MCF 10A (cell line): ENCODE measurements at regions of chr11 and their contacts with region 1.

Region 1: DNA sequence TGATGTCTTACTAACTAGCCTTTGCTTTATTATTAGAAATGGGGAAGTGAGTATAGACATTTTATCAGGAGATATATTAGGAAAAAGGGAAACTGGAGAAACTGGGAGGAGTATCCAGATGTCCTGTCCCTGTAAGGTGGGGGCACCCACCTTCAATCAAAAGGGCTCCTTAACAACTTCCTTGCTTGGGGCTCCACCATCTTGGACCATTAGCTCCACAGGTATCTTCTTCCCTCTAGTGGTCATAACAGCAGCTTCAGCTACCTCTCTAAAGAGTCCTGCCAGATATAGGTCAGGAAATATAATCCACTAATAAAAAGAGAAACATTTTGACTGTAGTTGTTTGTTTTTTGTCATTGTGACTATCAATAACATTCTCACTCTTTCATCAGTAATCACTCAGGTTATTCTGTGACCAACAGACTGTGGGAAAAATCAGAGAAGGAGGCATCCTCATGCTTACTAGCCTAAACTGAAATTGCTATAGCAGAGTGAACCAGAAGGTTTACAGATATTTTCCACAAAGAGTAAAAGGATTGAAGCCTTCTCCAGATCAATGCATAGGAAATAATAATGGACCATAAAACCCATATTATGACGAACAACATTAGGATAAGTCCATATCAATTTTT is 10.4 kb downstream of the OR51B4 start:
- DNase-seq: peak; percentile 54
- H3K4me3 Mint-ChIP-seq: no peak overlapping the region
- H3K27ac Mint-ChIP-seq: no peak overlapping the region
- H3K4me1 Mint-ChIP-seq: no peaks in the 10 kb centered on the region
- H3K27me3 Mint-ChIP-seq: peaks cover 13% of the 10 kb centered on the region
- CTCF ChIP-seq: peak; percentile 68

Region 2: GRCh38 chr11:4626207-4627099 is 664.9 kb before region 1 on chr11:
- CTCF ChIA-PET with region 1: interaction called, 3 read pairs
- POLR2A ChIA-PET with region 1: no interaction called
- intact Hi-C with region 1: loop called (anchors 5 kb)
- DNase-seq: peak; percentile 88
- H3K4me3 Mint-ChIP-seq: no peak overlapping the region
- H3K27ac Mint-ChIP-seq: no peak overlapping the region
- H3K4me1 Mint-ChIP-seq: no peaks in the 10 kb centered on the region
- H3K27me3 Mint-ChIP-seq: peaks cover 45% of the 10 kb centered on the region
- CTCF ChIP-seq: peak; percentile 73

Region 3: GRCh38 chr11:5107285-5107684 is 184.0 kb before region 1 on chr11:
- CTCF ChIA-PET with region 1: no interaction called
- POLR2A ChIA-PET with region 1: no interaction called
- intact Hi-C with region 1: no loop called
- DNase-seq: no peak
- H3K4me3 Mint-ChIP-seq: no peak overlapping the region
- H3K27ac Mint-ChIP-seq: no peak overlapping the region
- H3K4me1 Mint-ChIP-seq: no peaks in the 10 kb centered on the region
- H3K27me3 Mint-ChIP-seq: peaks cover 44% of the 10 kb centered on the region
- CTCF ChIP-seq: no peak

Region 4: DNA sequence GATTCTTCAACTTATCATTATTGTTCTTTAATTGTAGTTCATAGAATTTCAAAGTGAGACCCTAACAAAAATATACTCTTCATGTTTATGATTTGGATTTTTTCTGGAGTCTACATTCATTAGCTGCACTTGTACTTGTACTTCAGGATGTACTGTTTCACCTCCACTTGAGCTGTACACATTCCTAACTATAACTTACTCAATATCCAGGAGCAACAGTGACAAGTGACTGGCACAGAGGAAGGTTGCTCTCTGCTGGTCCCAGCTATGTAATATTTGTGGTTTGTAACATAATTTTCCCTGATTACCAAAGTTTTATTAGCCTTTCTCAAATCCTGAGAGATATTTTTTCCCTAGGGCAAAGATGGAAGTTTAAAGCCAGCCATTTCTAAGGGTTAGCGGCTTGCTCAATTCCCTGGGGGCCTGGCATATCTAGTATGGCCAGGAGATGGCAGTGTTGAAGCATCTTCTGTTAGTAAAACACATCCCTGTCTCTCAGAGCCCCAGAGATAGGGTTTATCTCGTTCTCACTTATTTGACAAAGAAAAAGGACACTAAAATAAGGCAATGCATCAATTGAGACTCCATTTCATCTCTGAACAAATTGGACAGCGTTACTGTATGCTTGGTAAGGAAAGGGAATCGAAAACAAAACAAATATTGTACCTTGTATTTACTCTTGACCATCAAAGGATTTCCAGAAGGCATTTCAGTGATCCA is 167.4 kb before region 1 on chr11:
- CTCF ChIA-PET with region 1: interaction called, 24 read pairs
- POLR2A ChIA-PET with region 1: no interaction called
- intact Hi-C with region 1: loop called (anchors 1 kb)
- DNase-seq: peak; percentile 74
- H3K4me3 Mint-ChIP-seq: no peak overlapping the region
- H3K27ac Mint-ChIP-seq: no peak overlapping the region
- H3K4me1 Mint-ChIP-seq: no peaks in the 10 kb centered on the region
- H3K27me3 Mint-ChIP-seq: peaks cover 62% of the 10 kb centered on the region
- CTCF ChIP-seq: peak; percentile 80

Region 5: GRCh38 chr11:5204787-5205186 is 86.5 kb before region 1 on chr11:
- CTCF ChIA-PET with region 1: interaction called, 18 read pairs
- POLR2A ChIA-PET with region 1: interaction called, 3 read pairs
- intact Hi-C with region 1: loop called (anchors 1 kb)
- DNase-seq: peak; percentile 63
- H3K4me3 Mint-ChIP-seq: no peak overlapping the region
- H3K27ac Mint-ChIP-seq: no peak overlapping the region
- H3K4me1 Mint-ChIP-seq: peaks cover 5% of the 10 kb centered on the region
- H3K27me3 Mint-ChIP-seq: peaks cover 39% of the 10 kb centered on the region
- CTCF ChIP-seq: peak; percentile 58

Region 6: DNA sequence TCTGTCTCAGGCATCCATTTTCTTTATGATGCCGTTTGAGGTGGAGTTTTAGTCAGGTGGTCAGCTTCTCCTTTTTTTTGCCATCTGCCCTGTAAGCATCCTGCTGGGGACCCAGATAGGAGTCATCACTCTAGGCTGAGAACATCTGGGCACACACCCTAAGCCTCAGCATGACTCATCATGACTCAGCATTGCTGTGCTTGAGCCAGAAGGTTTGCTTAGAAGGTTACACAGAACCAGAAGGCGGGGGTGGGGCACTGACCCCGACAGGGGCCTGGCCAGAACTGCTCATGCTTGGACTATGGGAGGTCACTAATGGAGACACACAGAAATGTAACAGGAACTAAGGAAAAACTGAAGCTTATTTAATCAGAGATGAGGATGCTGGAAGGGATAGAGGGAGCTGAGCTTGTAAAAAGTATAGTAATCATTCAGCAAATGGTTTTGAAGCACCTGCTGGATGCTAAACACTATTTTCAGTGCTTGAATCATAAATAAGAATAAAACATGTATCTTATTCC is 10.7 kb before region 1 on chr11:
- CTCF ChIA-PET with region 1: interaction called, 12 read pairs
- POLR2A ChIA-PET with region 1: no interaction called
- intact Hi-C with region 1: no loop called
- DNase-seq: peak; percentile 97
- H3K4me3 Mint-ChIP-seq: no peak overlapping the region
- H3K27ac Mint-ChIP-seq: no peak overlapping the region
- H3K4me1 Mint-ChIP-seq: peaks cover 17% of the 10 kb centered on the region
- H3K27me3 Mint-ChIP-seq: no peaks in the 10 kb centered on the region
- CTCF ChIP-seq: no peak

Region 7: DNA sequence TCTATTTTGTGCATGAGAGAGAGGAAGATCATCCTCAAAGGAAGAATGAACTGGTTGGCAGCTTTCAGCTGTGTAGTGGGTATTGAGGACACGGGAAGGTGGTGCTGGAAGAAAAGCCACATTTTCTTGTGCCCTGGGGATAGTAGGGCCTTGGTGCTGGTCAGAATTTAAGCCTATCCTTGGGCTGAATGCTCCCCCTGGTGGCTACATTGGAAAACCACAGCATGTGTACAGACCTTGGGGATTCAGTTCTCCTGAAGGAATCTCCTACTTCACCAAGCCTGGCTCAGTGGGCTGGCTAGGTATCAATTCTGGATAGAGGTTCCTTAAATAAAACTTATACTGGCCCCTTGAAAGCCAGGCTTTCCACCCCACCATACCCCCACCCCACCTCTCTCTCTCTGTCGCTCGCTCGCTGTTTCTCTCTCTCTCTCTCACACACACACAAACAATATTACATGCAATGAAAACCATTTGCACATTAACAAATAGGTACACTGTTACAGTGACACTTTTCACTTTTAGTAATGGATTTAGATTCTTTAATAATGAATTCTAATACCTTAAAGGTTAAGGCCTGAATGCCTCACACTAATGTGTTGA is 89.5 kb after region 1 on chr11:
- CTCF ChIA-PET with region 1: no interaction called
- POLR2A ChIA-PET with region 1: no interaction called
- intact Hi-C with region 1: loop called (anchors 2 kb)
- DNase-seq: peak; percentile 74
- H3K4me3 Mint-ChIP-seq: no peak overlapping the region
- H3K27ac Mint-ChIP-seq: no peak overlapping the region
- H3K4me1 Mint-ChIP-seq: no peaks in the 10 kb centered on the region
- H3K27me3 Mint-ChIP-seq: peaks cover 23% of the 10 kb centered on the region
- CTCF ChIP-seq: peak; percentile 78